Breast epithelium (tissue), 4 donors: ENCODE measurements at regions of chr2 and their contacts with region 1.

Region 1: GRCh38 chr2:213411582-213412289 is 127.5 kb downstream of the SPAG16 start:
- DNase-seq: no peak
- H3K4me3 ChIP-seq: no peak overlapping the region
- H3K27ac ChIP-seq: no peak overlapping the region
- H3K4me1 ChIP-seq: no peaks in the 10 kb centered on the region
- H3K27me3 ChIP-seq: no peaks in the 10 kb centered on the region
- CTCF ChIP-seq: no peak
- POLR2A ChIP-seq: no peak

Region 2: DNA sequence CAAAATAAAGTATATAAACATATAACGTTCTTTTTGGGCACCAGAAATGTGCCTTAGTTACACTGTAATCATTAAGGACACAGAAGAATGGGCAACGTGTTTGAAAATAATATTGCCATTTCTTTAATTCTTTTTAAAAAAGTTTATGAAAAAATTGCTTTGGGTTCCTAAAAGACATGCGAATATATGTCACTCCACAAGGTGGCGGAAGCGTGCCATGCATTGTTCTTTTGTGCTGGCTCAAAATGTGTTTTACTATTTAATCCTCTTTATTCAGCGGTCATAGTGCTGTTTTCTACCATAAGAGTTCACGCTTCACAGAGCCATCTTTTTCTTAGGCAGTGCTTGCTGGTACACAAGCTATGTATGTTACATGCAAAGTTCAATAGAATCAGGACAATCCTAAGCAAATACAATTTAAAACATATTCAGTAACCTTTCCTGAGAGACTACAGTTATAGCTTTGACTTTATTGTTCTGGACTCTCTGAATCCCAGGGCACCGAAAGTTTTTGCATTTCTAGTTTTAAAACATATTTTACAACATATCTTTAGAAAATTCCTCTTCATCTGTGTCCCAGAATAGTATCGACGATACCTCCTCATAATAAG is 725.3 kb before region 1 on chr2:
- intact Hi-C with region 1: loop called (anchors 10 kb)
- DNase-seq: peak; percentile 26 to 54
- H3K4me3 ChIP-seq: no peak overlapping the region
- H3K27ac ChIP-seq: no peak overlapping the region
- H3K4me1 ChIP-seq: peaks cover 0 to 6% of the 10 kb centered on the region in 2 donors
- H3K27me3 ChIP-seq: no peaks in the 10 kb centered on the region
- CTCF ChIP-seq: peak; percentile 63 to 79 (median 70)
- POLR2A ChIP-seq: no peak